Mammary epithelial cell (primary cell): ENCODE measurements at regions of chr2 and their contacts with region 1.

Region 1: GRCh38 chr2:152421521-152422370 is 86.8 kb downstream of the FMNL2 start:
- DNase-seq: peak; percentile 97
- H3K4me3 ChIP-seq: peak overlapping the region; percentile 11 to 21 (median 20)
- H3K27ac ChIP-seq: peak overlapping the region; percentile 96
- H3K4me1 ChIP-seq: peaks cover 33% of the 10 kb centered on the region
- H3K27me3 ChIP-seq: no peaks in the 10 kb centered on the region
- CTCF ChIP-seq: no peak

Region 2: DNA sequence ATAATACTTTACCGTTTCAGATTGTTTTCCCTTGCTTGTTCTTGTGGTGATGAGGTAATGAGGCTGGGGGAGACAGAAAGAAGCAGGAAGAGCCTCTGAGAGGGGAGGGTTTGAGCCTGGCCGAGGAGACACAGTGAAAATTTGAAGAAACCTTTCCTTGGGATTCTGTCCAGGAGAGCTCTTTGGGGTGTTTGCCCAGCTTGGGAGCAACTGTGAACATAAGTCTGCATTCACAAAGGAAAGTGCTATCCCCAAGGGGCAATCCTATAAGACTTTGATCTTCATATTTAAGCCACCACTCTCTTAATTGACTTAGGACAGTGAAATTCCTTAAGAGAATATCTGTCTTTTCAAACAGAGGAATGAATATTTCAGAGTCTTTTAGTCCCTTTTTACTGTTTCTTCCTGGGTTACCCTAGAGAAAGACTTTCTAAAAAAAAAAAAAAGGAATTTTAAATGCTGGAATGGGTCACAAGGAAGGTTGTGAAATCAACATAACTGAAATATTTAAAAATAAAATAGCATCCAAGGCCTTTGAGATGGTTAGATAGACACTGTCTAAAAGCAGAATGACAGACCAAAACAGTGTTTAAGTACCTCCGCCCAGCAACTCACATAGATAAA is 193.7 kb before region 1 on chr2:
- CTCF ChIA-PET with region 1: no interaction called
- dilution Hi-C with region 1: no loop called
- in situ Hi-C with region 1: no loop called
- intact Hi-C with region 1: no loop called
- DNase-seq: no peak
- H3K4me3 ChIP-seq: no peak overlapping the region
- H3K27ac ChIP-seq: no peak overlapping the region
- H3K4me1 ChIP-seq: peaks cover 6% of the 10 kb centered on the region
- H3K27me3 ChIP-seq: no peaks in the 10 kb centered on the region
- CTCF ChIP-seq: no peak

Region 3: DNA sequence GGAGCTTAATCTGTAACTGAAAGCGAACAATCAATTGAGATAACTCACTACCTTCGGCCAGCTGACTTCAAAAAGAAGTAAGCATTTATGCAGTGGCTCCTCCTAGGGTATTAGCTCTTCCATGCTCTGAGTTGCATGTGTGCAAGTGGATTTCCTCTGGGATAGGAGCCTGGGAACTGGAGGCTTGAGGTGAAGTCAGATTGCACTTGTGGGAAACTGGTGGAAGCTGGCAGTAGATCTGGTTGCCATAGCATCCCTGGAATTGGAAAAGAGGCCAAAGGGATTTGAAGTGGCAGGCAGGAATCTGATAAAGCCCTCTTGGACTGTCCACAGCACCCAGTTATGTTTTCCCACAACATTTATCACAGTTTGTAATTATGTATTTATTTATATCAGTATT is 137.3 kb before region 1 on chr2:
- CTCF ChIA-PET with region 1: no interaction called
- dilution Hi-C with region 1: no loop called
- in situ Hi-C with region 1: no loop called
- intact Hi-C with region 1: no loop called
- DNase-seq: no peak
- H3K4me3 ChIP-seq: no peak overlapping the region
- H3K27ac ChIP-seq: no peak overlapping the region
- H3K4me1 ChIP-seq: no peaks in the 10 kb centered on the region
- H3K27me3 ChIP-seq: no peaks in the 10 kb centered on the region
- CTCF ChIP-seq: no peak

Region 4: GRCh38 chr2:152347076-152347475 is 74.7 kb before region 1 on chr2:
- CTCF ChIA-PET with region 1: no interaction called
- dilution Hi-C with region 1: no loop called
- in situ Hi-C with region 1: no loop called
- intact Hi-C with region 1: no loop called
- DNase-seq: peak; percentile 97
- H3K4me3 ChIP-seq: no peak overlapping the region
- H3K27ac ChIP-seq: no peak overlapping the region
- H3K4me1 ChIP-seq: peaks cover 21% of the 10 kb centered on the region
- H3K27me3 ChIP-seq: no peaks in the 10 kb centered on the region
- CTCF ChIP-seq: no peak

Region 5: DNA sequence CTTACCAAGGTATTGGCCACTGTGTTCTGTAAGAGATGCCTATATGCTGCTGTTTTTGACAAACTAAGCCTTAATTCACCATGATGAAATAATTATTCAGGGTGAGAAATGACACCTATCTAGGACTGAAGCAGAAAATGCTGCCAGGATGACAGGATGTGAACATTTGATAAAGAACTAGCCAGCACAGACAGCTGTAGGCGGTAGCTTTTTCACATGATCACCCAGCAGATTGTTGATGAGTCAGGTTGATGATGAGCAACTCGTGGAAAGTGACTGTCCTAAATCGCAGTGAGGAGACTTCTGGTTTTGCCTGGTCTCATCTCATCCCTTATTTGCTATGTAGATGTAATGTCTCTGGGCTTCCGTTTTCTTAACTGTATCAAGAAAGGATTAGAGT is 151.4 kb after region 1 on chr2:
- CTCF ChIA-PET with region 1: no interaction called
- dilution Hi-C with region 1: no loop called
- in situ Hi-C with region 1: no loop called
- intact Hi-C with region 1: loop called (anchors 5 kb)
- DNase-seq: peak; percentile 91
- H3K4me3 ChIP-seq: no peak overlapping the region
- H3K27ac ChIP-seq: peak overlapping the region; percentile 41
- H3K4me1 ChIP-seq: peaks cover 27% of the 10 kb centered on the region
- H3K27me3 ChIP-seq: no peaks in the 10 kb centered on the region
- CTCF ChIP-seq: no peak

Region 6: DNA sequence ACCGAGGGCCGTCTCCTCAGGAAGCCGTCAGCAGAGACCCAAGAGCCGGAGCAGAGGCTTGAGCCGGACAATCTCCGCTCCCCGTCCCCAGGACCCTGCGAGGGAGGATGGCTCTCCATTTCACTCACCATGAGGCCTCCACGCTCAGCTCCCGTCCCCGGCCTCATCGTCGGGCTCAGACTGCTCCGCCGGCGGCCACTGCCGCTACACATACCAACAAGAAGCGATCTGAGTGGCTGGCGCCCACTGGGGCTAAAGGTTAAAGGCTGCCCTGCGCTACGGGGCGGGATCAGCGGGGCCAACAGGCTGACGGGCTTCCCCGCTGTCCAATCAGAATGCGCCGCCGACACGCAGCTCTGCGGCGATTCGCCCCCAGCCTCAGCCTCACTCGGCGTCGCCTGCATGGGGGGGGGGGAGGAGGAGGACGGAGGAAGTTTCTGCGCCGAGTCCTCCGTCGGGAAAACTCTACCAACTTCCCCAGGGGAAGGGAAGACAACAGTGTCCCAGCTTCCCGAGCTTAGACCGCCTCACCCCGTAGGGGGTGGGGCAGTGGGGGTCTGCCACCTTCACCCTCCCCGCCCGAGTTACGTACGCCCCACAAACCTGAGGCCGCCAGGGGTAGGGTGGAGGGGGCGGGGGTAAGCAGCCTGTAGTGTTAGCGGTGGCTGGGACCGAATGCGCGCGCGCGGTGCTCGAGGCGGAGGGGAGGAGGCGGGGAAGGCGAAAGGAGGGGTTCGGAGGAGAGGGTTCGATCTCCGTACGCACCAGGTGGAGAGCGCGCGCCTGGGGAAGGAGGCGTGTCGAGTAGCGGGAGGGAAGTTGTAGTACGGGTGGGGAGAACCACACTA is 295.7 kb after region 1 on chr2 and contains the start of gene PRPF40A:
- CTCF ChIA-PET with region 1: no interaction called
- dilution Hi-C with region 1: no loop called
- in situ Hi-C with region 1: no loop called
- intact Hi-C with region 1: loop called (anchors 10 kb)
- DNase-seq: peak; percentile 97
- H3K4me3 ChIP-seq: peak within 1 kb of the TSS; percentile 89 to 97 (median 91)
- H3K27ac ChIP-seq: peak within 1 kb of the TSS; percentile 91
- H3K4me1 ChIP-seq: peaks cover 14% of the 10 kb centered on the region
- H3K27me3 ChIP-seq: no peaks in the 10 kb centered on the region
- CTCF ChIP-seq: no peak
- total RNA-seq, gene PRPF40A: 126 to 133 TPM